CD8-positive, alpha-beta T cell (primary cell): ENCODE measurements at regions of chr1 and their contacts with region 1.

Region 1: DNA sequence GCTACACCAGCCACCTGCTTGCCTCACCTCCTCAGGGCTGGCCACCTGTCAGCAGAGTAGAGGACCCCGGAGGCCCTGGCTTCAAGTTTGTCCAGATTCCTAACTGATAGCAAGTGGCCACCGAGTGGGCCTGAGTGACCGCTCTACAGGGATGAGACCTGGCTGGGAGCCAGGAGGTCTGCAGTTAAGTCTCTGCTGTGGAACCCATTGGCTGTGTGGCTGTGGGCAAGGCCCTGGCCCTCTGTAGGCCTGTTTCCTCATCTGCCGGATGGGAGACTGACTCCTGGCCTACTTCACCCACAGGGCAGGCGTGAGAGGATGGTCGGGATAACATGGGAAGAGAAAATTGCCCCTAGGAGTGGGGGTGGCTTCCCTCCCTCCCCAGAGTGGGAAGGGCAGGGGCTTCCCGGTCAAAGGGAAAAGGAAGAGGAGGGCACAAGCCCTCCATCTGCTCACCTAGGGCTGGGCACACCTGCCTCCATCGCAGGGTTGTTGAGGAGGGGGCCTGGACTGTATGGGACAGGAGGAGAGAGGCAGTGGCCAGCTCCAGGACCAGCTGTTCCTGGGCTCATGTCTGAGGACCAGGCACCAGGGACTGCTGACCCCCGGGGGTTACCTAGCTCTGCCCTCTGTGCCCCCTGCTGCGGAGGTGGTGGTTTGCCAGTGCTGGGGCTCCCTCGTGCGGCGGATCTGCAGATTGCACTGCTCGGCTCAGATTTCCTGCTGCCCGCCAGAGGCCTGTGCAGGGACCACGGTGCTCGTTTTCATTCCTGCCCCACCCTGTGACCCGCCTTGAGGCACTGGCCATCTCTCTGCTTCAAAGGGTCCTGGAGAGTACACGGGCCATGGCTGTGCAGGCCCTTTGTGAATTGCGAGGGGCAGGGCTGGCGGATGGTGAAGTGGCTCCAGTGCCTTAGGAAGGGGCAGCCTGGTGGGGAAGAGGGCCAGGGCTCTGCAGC is 9.1 kb upstream of the MTFR1L start:
- DNase-seq: peak; percentile 67 to 91 (median 82)
- ATAC-seq: peak; percentile 98
- H3K4me3 ChIP-seq: no peak overlapping the region
- H3K4me3 Mint-ChIP-seq: no peak overlapping the region
- H3K27ac ChIP-seq: no peak overlapping the region
- H3K27ac Mint-ChIP-seq: no peak overlapping the region
- H3K4me1 ChIP-seq: peaks cover 5% of the 10 kb centered on the region
- H3K4me1 Mint-ChIP-seq: peaks cover 5% of the 10 kb centered on the region
- H3K27me3 ChIP-seq: no peaks in the 10 kb centered on the region
- H3K27me3 Mint-ChIP-seq: no peaks in the 10 kb centered on the region
- CTCF ChIP-seq: peak; percentile 98

Region 2: GRCh38 chr1:25239681-25240541 is 570.7 kb before region 1 on chr1:
- CTCF ChIA-PET with region 1: no interaction called
- POLR2A ChIA-PET with region 1: no interaction called
- intact Hi-C with region 1: loop called in 1 of 2 experiments (anchors 2 kb)
- DNase-seq: peak; percentile 64 to 94 (median 82)
- ATAC-seq: peak; percentile 84
- H3K4me3 ChIP-seq: peak overlapping the region; percentile 37 to 60
- H3K4me3 Mint-ChIP-seq: peak overlapping the region; percentile 92
- H3K27ac ChIP-seq: peak overlapping the region; percentile 64 to 88
- H3K27ac Mint-ChIP-seq: peak overlapping the region; percentile 97
- H3K4me1 ChIP-seq: peaks cover 47% of the 10 kb centered on the region
- H3K4me1 Mint-ChIP-seq: peaks cover 61% of the 10 kb centered on the region
- H3K27me3 ChIP-seq: no peaks in the 10 kb centered on the region
- H3K27me3 Mint-ChIP-seq: no peaks in the 10 kb centered on the region
- CTCF ChIP-seq: peak; percentile 61

Region 3: DNA sequence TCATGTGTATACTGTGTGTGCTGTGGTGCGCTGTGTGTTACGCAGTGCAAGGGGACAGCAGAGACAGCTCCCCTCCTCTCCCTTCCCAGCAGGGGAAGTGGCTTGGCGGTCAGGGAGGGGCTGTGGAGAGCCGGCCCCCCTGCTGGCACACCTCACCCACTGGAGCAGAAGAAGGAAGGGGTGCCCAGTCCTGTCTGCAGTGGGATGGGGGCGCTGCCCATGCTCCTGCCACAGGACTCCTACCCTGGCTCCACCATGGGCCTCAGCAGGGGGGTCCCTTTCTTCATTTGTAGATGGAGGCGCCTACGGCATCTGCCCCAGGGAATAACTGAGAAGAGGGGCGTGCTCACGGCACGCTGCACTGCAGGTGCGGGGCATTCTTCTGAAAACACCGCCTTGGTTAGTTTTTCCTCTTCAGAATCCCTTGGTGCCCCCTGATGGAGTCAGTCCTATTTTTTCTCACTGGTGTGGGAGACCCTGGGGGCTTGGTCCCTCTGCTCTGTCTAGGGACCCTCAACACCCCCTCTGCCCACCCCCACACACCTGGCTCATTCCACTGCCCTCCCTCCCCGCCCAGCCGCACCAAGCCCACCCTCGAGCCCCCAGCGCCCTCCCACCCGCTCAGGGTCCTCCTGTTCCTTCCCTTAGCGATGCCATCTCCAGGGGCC is 281.0 kb before region 1 on chr1:
- CTCF ChIA-PET with region 1: interaction called, 3 read pairs
- POLR2A ChIA-PET with region 1: no interaction called
- intact Hi-C with region 1: loop called in 1 of 2 experiments (anchors 5 kb)
- DNase-seq: no peak
- ATAC-seq: no peak
- H3K4me3 ChIP-seq: no peak overlapping the region
- H3K4me3 Mint-ChIP-seq: no peak overlapping the region
- H3K27ac ChIP-seq: no peak overlapping the region
- H3K27ac Mint-ChIP-seq: no peak overlapping the region
- H3K4me1 ChIP-seq: peaks cover 3% of the 10 kb centered on the region
- H3K4me1 Mint-ChIP-seq: peaks cover 6% of the 10 kb centered on the region
- H3K27me3 ChIP-seq: no peaks in the 10 kb centered on the region
- H3K27me3 Mint-ChIP-seq: no peaks in the 10 kb centered on the region
- CTCF ChIP-seq: no peak

Region 4: GRCh38 chr1:25566730-25567341 is 243.8 kb before region 1 on chr1:
- CTCF ChIA-PET with region 1: interaction called, 11 read pairs
- POLR2A ChIA-PET with region 1: interaction called, 3 read pairs
- intact Hi-C with region 1: no loop called
- DNase-seq: peak in 7 of 9 experiments; percentile 40 to 82 (median 74)
- ATAC-seq: peak; percentile 27
- H3K4me3 ChIP-seq: peak overlapping the region in 1 of 2 experiments; percentile 85
- H3K4me3 Mint-ChIP-seq: peak overlapping the region; percentile 95
- H3K27ac ChIP-seq: peak overlapping the region in 1 of 2 experiments; percentile 25
- H3K27ac Mint-ChIP-seq: peak overlapping the region; percentile 96
- H3K4me1 ChIP-seq: peaks cover 73% of the 10 kb centered on the region
- H3K4me1 Mint-ChIP-seq: peaks cover 86% of the 10 kb centered on the region
- H3K27me3 ChIP-seq: no peaks in the 10 kb centered on the region
- H3K27me3 Mint-ChIP-seq: no peaks in the 10 kb centered on the region
- CTCF ChIP-seq: peak; percentile 49

Region 5: DNA sequence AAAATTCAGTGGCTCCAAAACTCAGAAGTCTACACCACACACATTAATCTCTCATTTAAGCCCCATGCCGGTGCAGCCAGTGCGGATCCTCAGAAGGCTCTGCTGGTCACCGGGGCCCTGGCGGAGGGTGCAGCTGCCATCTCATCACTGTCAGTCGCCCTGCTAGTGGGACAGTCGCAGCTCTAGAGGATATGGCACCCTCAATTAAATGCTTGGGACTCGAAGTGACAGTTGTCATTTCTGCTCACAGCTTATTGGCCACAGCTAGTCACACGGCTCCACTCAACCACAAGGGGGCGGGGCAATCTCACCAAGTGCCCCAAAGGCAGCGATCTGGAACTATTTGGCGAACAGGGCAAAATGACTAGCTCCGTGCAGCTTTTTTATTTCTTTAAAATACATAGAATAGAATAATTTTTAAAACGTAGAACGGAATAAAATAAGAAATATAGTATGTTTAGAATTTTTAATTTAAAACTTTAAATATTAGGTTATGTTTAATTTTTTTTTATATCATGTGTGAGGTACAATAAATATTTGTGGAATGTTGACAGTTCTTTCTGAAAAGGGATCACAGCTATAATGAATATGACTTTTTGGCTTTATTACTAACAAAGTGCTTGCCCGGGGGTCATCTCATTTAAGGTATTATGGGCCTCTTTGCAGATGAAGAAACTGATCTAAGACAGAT is 202.0 kb before region 1 on chr1:
- CTCF ChIA-PET with region 1: interaction called, 135 read pairs
- POLR2A ChIA-PET with region 1: interaction called, 3 read pairs
- intact Hi-C with region 1: loop called (anchors 1 kb)
- DNase-seq: peak; percentile 63 to 93 (median 90)
- ATAC-seq: peak; percentile 99
- H3K4me3 ChIP-seq: no peak overlapping the region
- H3K4me3 Mint-ChIP-seq: no peak overlapping the region
- H3K27ac ChIP-seq: no peak overlapping the region
- H3K27ac Mint-ChIP-seq: no peak overlapping the region
- H3K4me1 ChIP-seq: peaks cover 3% of the 10 kb centered on the region
- H3K4me1 Mint-ChIP-seq: peaks cover 12% of the 10 kb centered on the region
- H3K27me3 ChIP-seq: no peaks in the 10 kb centered on the region
- H3K27me3 Mint-ChIP-seq: no peaks in the 10 kb centered on the region
- CTCF ChIP-seq: no peak

Region 6: DNA sequence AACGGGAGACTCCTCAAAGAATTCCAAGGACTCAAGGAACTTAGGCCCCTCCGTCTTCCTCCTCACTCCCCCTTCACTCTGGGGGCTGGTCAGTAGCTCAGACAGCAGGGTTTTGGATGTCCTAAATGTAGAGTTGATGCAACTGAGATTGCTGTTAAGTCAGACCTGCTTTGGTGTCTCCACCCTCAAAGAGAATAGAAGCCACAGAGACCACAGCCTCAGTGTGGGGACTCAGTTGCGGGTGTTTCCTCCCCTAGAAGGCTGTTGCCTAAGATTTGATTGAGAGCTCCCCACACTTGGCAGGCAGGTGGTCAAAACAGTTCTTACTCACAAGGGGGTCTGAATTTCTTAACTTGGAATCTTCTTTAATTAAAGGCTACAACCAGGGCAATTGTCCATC is 186.5 kb before region 1 on chr1:
- CTCF ChIA-PET with region 1: interaction called, 14 read pairs
- POLR2A ChIA-PET with region 1: no interaction called
- intact Hi-C with region 1: no loop called
- DNase-seq: peak in 2 of 9 experiments; percentile 33 to 61
- ATAC-seq: no peak
- H3K4me3 ChIP-seq: no peak overlapping the region
- H3K4me3 Mint-ChIP-seq: peak overlapping the region; percentile 8
- H3K27ac ChIP-seq: peak overlapping the region in 1 of 2 experiments; percentile 9
- H3K27ac Mint-ChIP-seq: no peak overlapping the region
- H3K4me1 ChIP-seq: peaks cover 67% of the 10 kb centered on the region
- H3K4me1 Mint-ChIP-seq: peaks cover 87% of the 10 kb centered on the region
- H3K27me3 ChIP-seq: no peaks in the 10 kb centered on the region
- H3K27me3 Mint-ChIP-seq: no peaks in the 10 kb centered on the region
- CTCF ChIP-seq: no peak

Region 7: GRCh38 chr1:25796811-25797458 is 13.7 kb before region 1 on chr1:
- CTCF ChIA-PET with region 1: interaction called, 33 read pairs
- POLR2A ChIA-PET with region 1: no interaction called
- intact Hi-C with region 1: no loop called
- DNase-seq: peak; percentile 64 to 89 (median 86)
- ATAC-seq: peak; percentile 48
- H3K4me3 ChIP-seq: peak overlapping the region in 1 of 2 experiments; percentile 12
- H3K4me3 Mint-ChIP-seq: peak overlapping the region; percentile 75
- H3K27ac ChIP-seq: peak overlapping the region; percentile 33 to 62
- H3K27ac Mint-ChIP-seq: peak overlapping the region; percentile 97
- H3K4me1 ChIP-seq: peaks cover 52% of the 10 kb centered on the region
- H3K4me1 Mint-ChIP-seq: peaks cover 70% of the 10 kb centered on the region
- H3K27me3 ChIP-seq: no peaks in the 10 kb centered on the region
- H3K27me3 Mint-ChIP-seq: no peaks in the 10 kb centered on the region
- CTCF ChIP-seq: peak; percentile 62